ENCODE measurements at regions of chr17 and their contacts with region 1.

Region 1: GRCh38 chr17:76481071-76481655 is 13.8 kb downstream of the AANAT start:
- DNase-seq: peak; percentile 98
- H3K4me3 ChIP-seq: peak overlapping the region; percentile 67
- H3K27ac ChIP-seq: peak overlapping the region; percentile 95
- H3K4me1 ChIP-seq: peaks cover 84% of the 10 kb centered on the region
- CTCF ChIP-seq: no peak

Region 2: GRCh38 chr17:76467366-76467765 is 13.8 kb before region 1 on chr17 and contains the start of gene AANAT:
- CTCF ChIA-PET with region 1: interaction called, 11 read pairs
- POLR2A ChIA-PET with region 1: interaction called, 6 read pairs
- intact Hi-C with region 1: loop called (anchors 1 kb)
- DNase-seq: no peak
- H3K4me3 ChIP-seq: no peak within 1 kb of the TSS
- H3K27ac ChIP-seq: peak within 1 kb of the TSS; percentile 38
- H3K4me1 ChIP-seq: peaks cover 35% of the 10 kb centered on the region
- CTCF ChIP-seq: no peak
- total RNA-seq, gene AANAT: not detected in 2 replicates

Region 3: DNA sequence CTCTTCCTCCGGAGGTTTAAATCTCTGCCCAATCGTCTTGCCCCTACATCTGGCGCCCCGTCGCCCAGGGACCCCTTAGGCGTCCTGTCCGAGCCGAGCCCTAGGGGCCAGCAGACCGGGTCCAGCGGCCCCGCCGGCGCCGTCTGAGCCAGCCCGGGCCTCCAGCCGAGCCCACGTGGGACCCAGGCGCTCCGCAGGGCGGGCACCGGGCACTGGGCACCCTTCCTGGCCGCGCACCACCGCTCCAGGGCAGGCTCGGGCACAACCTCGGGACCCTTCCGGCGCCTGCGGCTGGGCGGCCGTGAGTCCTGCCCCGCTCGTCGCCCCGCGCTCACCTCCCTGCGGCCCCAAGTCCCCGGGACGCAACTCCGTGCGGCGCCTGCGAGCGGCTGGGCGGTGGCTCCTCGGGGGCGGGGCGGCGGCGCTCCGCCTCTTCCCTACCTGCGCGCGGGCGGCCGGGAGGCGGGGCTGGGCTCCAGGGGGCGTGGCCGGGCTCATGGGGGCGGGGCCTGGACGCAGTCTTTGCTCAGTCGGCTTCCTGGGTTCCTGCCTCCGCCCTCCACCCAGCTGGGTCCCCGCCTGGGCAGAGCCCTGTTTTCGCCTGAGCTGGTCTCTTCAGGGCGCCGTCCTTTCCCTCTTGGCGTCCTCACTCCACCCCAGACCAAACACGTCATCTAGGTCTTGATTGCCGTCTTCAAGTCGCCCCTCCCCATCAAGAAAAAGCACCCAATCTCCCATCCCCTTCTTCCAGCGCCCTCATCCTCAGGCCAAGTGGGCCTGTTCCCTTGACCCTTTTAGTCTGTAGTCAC is 20.1 kb after region 1 on chr17 and contains the start of gene RHBDF2:
- CTCF ChIA-PET with region 1: interaction called, 9 read pairs
- POLR2A ChIA-PET with region 1: interaction called, 57 read pairs
- intact Hi-C with region 1: loop called (anchors 1 kb)
- DNase-seq: peak; percentile 94
- H3K4me3 ChIP-seq: peak within 1 kb of the TSS; percentile 96
- H3K27ac ChIP-seq: peak within 1 kb of the TSS; percentile 83
- H3K4me1 ChIP-seq: peaks cover 77% of the 10 kb centered on the region
- CTCF ChIP-seq: no peak
- total RNA-seq, gene RHBDF2: 122 and 144 TPM in 2 replicates

Region 4: DNA sequence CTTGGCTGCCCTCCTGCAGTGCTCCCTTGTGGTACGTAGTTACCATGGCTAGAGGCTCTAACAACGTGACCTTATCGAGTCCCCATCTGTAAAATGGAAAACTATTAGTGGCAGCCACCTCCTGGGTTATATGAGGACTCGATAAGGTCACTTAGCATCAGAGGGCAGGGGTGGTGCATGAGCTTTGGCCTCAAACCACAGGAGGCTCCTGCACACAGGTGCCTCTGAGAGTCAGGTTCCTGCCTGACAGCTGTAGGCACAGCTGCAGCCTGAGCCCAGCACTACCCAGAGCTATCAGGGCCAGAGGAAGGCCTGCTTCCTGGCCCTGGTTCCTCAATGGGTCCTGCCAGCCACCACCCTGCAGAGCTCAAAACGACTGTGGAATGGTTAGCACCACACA is 602.4 kb after region 1 on chr17:
- CTCF ChIA-PET with region 1: interaction called, 5 read pairs
- POLR2A ChIA-PET with region 1: no interaction called
- intact Hi-C with region 1: loop called (anchors 5 kb)
- DNase-seq: peak; percentile 93
- H3K4me3 ChIP-seq: no peak overlapping the region
- H3K27ac ChIP-seq: peak overlapping the region; percentile 58
- H3K4me1 ChIP-seq: peaks cover 48% of the 10 kb centered on the region
- CTCF ChIP-seq: no peak; the same call in 1 of the 2 replicates